ENCODE measurements at regions of chr1 and their contacts with region 1.

Region 1: GRCh38 chr1:103514920-103515503 is 10.5 kb upstream of the RNPC3 start:
- DNase-seq: peak; percentile 37
- H3K4me3 ChIP-seq: no peak overlapping the region
- H3K27ac ChIP-seq: no peak overlapping the region
- H3K4me1 ChIP-seq: peaks cover 27% of the 10 kb centered on the region
- H3K27me3 ChIP-seq: no peaks in the 10 kb centered on the region
- CTCF ChIP-seq: peak; percentile 69 to 79

Region 2: DNA sequence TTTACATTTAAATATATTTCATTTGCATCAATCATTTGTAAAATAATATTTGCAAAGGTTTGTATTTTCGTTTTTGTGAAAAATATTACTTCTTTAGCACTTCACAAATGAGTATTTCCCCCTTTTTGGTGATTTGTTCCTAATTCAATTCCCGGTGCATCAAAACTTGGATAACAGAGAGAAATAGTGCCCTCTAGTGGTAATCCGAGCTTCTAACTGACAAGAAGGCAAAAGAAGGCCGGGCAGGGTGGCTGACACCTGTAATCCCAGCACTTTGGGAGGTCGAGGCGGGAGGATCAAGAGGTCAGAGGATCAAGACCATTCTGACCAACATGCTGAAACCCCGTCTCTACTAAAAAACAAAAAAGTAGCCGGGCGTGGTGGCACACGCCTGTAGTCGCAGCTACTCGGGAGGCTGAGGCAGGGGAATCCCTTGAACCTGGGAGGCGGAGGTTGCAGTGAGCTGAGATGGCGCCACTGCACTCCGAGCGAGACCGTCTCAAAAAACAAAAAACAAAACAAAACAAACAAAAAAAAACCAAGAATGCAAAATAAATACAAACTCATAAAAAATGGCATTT is 544.4 kb before region 1 on chr1:
- CTCF ChIA-PET with region 1: no interaction called
- dilution Hi-C with region 1: no loop called
- in situ Hi-C with region 1: no loop called
- intact Hi-C with region 1: loop called (anchors 5 kb)
- DNase-seq: peak; percentile 37
- H3K4me3 ChIP-seq: no peak overlapping the region
- H3K27ac ChIP-seq: no peak overlapping the region
- H3K4me1 ChIP-seq: no peaks in the 10 kb centered on the region
- H3K27me3 ChIP-seq: no peaks in the 10 kb centered on the region
- CTCF ChIP-seq: peak; percentile 49 to 72

Region 3: GRCh38 chr1:103106426-103107341 is 408.3 kb before region 1 on chr1:
- CTCF ChIA-PET with region 1: no interaction called
- dilution Hi-C with region 1: no loop called
- in situ Hi-C with region 1: loop called (anchors 10 to 25 kb)
- intact Hi-C with region 1: loop called (anchors 1 kb)
- DNase-seq: peak; percentile 36
- H3K4me3 ChIP-seq: peak overlapping the region; percentile 29 to 53 (median 53)
- H3K27ac ChIP-seq: no peak overlapping the region
- H3K4me1 ChIP-seq: peaks cover 7% of the 10 kb centered on the region
- H3K27me3 ChIP-seq: no peaks in the 10 kb centered on the region
- CTCF ChIP-seq: peak; percentile 49 to 54

Region 4: GRCh38 chr1:103489935-103490334 is 25.1 kb before region 1 on chr1:
- CTCF ChIA-PET with region 1: no interaction called
- dilution Hi-C with region 1: no loop called
- in situ Hi-C with region 1: no loop called
- intact Hi-C with region 1: no loop called
- DNase-seq: peak; percentile 32
- H3K4me3 ChIP-seq: no peak overlapping the region
- H3K27ac ChIP-seq: no peak overlapping the region
- H3K4me1 ChIP-seq: no peaks in the 10 kb centered on the region
- H3K27me3 ChIP-seq: no peaks in the 10 kb centered on the region
- CTCF ChIP-seq: no peak

Region 5: GRCh38 chr1:103529746-103530145 is 14.7 kb after region 1 on chr1:
- CTCF ChIA-PET with region 1: no interaction called
- dilution Hi-C with region 1: no loop called
- in situ Hi-C with region 1: no loop called
- intact Hi-C with region 1: no loop called
- DNase-seq: peak; percentile 14
- H3K4me3 ChIP-seq: no peak overlapping the region
- H3K27ac ChIP-seq: no peak overlapping the region
- H3K4me1 ChIP-seq: peaks cover 4% of the 10 kb centered on the region
- H3K27me3 ChIP-seq: no peaks in the 10 kb centered on the region
- CTCF ChIP-seq: no peak

Region 6: DNA sequence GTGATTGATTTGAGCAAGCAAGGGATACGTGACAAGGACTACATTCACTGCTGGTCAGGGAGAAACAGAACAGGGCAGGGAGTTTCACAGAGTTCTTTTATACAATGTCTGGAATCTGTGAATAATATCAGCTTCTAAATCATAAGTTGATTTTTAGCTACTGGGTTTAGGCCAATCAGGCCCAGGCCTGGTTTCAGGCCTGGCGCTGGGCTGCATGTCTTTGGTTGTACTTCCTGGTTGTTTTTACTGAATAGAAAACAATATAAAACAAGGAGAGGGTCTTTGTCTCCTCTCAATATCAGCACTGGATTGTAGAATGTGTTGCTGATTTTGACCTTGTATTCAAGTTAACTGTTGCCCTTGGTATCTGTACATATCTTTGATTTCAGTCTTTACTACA is 101.3 kb after region 1 on chr1:
- CTCF ChIA-PET with region 1: no interaction called
- dilution Hi-C with region 1: no loop called
- in situ Hi-C with region 1: no loop called
- intact Hi-C with region 1: no loop called
- DNase-seq: no peak
- H3K4me3 ChIP-seq: no peak overlapping the region
- H3K27ac ChIP-seq: no peak overlapping the region
- H3K4me1 ChIP-seq: no peaks in the 10 kb centered on the region
- H3K27me3 ChIP-seq: no peaks in the 10 kb centered on the region
- CTCF ChIP-seq: no peak

Region 7: GRCh38 chr1:103788377-103788776 is 273.4 kb after region 1 on chr1:
- CTCF ChIA-PET with region 1: no interaction called
- dilution Hi-C with region 1: no loop called
- in situ Hi-C with region 1: no loop called
- intact Hi-C with region 1: no loop called
- DNase-seq: no peak
- H3K4me3 ChIP-seq: no peak overlapping the region
- H3K27ac ChIP-seq: no peak overlapping the region
- H3K4me1 ChIP-seq: no peaks in the 10 kb centered on the region
- H3K27me3 ChIP-seq: no peaks in the 10 kb centered on the region
- CTCF ChIP-seq: peak in 1 of 2 donors; percentile 30